Breast epithelium (tissue), 4 donors: ENCODE measurements at regions of chr4 and their contacts with region 1.

Region 1: GRCh38 chr4:71469541-71469940 is 130.7 kb downstream of the SLC4A4 start:
- DNase-seq: no peak
- H3K4me3 ChIP-seq: no peak overlapping the region
- H3K27ac ChIP-seq: no peak overlapping the region
- H3K4me1 ChIP-seq: no peaks in the 10 kb centered on the region
- H3K27me3 ChIP-seq: no peaks in the 10 kb centered on the region
- CTCF ChIP-seq: no peak
- POLR2A ChIP-seq: no peak

Region 2: GRCh38 chr4:71487344-71487920 is 17.9 kb after region 1 on chr4:
- intact Hi-C with region 1: loop called (anchors 1 kb)
- DNase-seq: no peak
- H3K4me3 ChIP-seq: no peak overlapping the region
- H3K27ac ChIP-seq: no peak overlapping the region
- H3K4me1 ChIP-seq: no peaks in the 10 kb centered on the region
- H3K27me3 ChIP-seq: no peaks in the 10 kb centered on the region
- CTCF ChIP-seq: no peak
- POLR2A ChIP-seq: no peak

Region 3: DNA sequence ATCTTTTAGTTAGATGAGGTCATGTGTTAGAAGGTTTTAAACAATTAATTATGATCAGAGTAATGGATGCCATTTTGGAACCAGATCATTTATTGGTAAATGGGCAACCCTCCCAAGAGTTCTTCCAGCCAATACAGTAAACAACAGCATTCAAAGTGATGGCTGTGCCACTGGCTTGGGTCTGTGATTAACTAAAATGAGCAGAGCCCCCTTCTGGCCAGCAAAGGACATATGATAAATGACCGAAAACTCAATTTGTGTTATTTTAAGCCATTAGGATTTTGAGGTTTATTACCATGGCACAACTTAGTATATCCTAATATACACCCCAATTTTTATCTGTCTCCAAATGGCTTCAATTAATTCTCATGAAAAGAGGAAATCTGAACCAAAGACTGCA is 471.5 kb after region 1 on chr4:
- intact Hi-C with region 1: no loop called
- DNase-seq: no peak
- H3K4me3 ChIP-seq: no peak overlapping the region
- H3K27ac ChIP-seq: no peak overlapping the region
- H3K4me1 ChIP-seq: no peaks in the 10 kb centered on the region
- H3K27me3 ChIP-seq: no peaks in the 10 kb centered on the region
- CTCF ChIP-seq: no peak
- POLR2A ChIP-seq: no peak